ENCODE measurements at regions of chr6 and their contacts with region 1.

Region 1: DNA sequence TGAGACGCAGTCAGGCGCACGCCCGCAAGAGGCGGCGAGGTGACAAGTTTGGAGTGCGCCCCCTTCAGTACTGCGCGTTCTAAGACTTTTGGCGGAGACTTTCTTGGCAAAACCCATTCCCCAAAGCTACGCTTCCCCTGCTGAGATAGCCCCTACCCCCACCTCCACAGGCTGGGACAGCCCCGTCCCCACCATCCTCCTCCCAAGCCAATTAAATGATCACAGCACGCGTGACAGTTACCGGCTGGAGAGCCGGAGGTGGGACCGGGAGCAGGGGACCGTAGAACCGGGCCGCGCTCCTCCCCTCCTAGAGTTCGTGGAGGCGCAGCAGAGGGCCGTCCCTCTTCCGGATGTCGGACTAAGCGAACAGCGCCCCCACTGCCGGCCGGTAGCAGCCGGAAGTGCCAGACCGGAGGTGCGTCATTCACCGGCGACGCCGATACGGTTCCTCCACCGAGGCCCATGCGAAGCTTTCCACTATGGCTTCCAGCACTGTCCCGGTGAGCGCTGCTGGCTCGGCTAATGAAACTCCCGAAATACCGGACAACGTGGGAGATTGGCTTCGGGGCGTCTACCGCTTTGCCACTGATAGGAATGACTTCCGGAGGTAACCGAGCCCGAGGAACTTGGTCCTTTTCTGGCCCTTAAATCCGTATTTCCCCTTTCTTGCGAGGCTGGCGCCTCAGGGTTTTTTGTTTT is at the start of gene TOMM6:
- DNase-seq: peak; percentile 77
- ATAC-seq: peak; percentile 90
- H3K4me3 ChIP-seq: peak within 1 kb of the TSS; percentile 100
- H3K27ac ChIP-seq: peak within 1 kb of the TSS; percentile 93
- H3K4me1 ChIP-seq: peaks cover 22% of the 10 kb centered on the region
- H3K27me3 ChIP-seq: no peaks in the 10 kb centered on the region
- CTCF ChIP-seq: peak; percentile 84 to 89 (median 88)
- EP300 ChIP-seq: no peak
- POLR2A ChIP-seq: peak; percentile 89
- RAD21 ChIP-seq: no peak
- polyA plus RNA-seq, gene TOMM6: 653 to 729 TPM

Region 2: GRCh38 chr6:41602864-41603608 is 184.3 kb before region 1 on chr6:
- CTCF ChIA-PET with region 1: interaction called, 12 read pairs
- POLR2A ChIA-PET with region 1: no interaction called
- RAD21 ChIA-PET with region 1: interaction called, 4 read pairs
- SMC1A ChIA-PET with region 1: no interaction called
- in situ Hi-C with region 1: no loop called
- intact Hi-C with region 1: no loop called
- DNase-seq: peak; percentile 24
- ATAC-seq: peak; percentile 94
- H3K4me3 ChIP-seq: no peak overlapping the region
- H3K27ac ChIP-seq: no peak overlapping the region
- H3K4me1 ChIP-seq: no peaks in the 10 kb centered on the region
- H3K27me3 ChIP-seq: no peaks in the 10 kb centered on the region; a peak in 1 of 4 replicates
- CTCF ChIP-seq: peak; percentile 93 to 96 (median 96)
- EP300 ChIP-seq: no peak
- POLR2A ChIP-seq: no peak
- RAD21 ChIP-seq: peak; percentile 90

Region 3: DNA sequence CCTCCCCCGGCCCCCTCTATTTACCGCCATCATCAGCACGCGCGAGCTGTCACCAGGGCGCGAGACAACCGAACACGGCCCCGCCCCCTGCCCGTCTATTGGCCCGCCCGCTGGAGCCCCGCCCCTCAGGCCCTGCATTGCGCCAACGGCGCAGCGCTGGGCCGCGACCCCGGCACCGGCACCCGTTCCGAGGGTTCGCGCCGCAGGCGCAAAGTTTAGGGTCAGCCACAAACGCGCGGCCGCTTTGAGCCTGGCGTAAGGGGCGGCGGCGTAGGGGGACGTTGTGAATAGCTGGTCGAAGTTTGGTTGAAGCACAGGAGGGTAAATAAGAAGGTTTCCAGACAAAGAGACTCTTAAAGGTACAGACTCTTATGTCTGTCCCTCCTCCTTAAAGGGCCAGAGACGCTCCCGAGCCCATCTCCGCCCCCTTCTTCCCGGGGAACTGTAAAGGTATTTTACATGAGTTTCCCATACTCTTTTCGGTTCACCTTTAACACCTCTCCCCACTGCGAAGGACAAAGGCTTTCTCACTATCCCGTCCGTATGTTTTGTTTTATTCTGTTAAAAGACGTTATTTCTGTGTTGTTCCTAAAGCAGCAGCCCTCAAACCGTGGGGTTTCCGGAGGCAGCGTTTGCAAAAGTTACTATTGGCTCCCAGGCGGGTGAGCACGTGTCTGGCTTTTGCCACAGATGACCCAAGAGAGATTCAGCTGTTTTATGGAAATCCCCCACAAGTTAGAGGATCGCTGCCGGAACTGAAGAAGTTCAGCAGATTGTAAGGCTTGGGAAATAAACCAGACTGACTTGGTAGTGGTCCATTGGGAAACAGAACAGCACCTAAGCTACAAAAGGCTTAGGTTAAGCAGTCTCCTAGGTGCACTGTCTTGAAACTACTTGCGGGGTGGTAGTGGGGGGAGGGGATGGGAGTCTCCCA is 108.2 kb after region 1 on chr6 and contains the start of gene USP49:
- CTCF ChIA-PET with region 1: no interaction called
- POLR2A ChIA-PET with region 1: interaction called, 3 read pairs
- RAD21 ChIA-PET with region 1: interaction called, 10 read pairs
- SMC1A ChIA-PET with region 1: interaction called, 3 read pairs
- in situ Hi-C with region 1: no loop called
- intact Hi-C with region 1: loop called (anchors 5 kb)
- DNase-seq: peak; percentile 65
- ATAC-seq: peak; percentile 96
- H3K4me3 ChIP-seq: peak within 1 kb of the TSS; percentile 89
- H3K27ac ChIP-seq: peak within 1 kb of the TSS; percentile 90
- H3K4me1 ChIP-seq: peaks cover 6% of the 10 kb centered on the region; the same call in 1 of the 2 replicates
- H3K27me3 ChIP-seq: no peaks in the 10 kb centered on the region
- CTCF ChIP-seq: no peak
- EP300 ChIP-seq: no peak
- POLR2A ChIP-seq: peak; percentile 75
- RAD21 ChIP-seq: no peak
- polyA plus RNA-seq, gene USP49: 1.0 TPM

Region 4: DNA sequence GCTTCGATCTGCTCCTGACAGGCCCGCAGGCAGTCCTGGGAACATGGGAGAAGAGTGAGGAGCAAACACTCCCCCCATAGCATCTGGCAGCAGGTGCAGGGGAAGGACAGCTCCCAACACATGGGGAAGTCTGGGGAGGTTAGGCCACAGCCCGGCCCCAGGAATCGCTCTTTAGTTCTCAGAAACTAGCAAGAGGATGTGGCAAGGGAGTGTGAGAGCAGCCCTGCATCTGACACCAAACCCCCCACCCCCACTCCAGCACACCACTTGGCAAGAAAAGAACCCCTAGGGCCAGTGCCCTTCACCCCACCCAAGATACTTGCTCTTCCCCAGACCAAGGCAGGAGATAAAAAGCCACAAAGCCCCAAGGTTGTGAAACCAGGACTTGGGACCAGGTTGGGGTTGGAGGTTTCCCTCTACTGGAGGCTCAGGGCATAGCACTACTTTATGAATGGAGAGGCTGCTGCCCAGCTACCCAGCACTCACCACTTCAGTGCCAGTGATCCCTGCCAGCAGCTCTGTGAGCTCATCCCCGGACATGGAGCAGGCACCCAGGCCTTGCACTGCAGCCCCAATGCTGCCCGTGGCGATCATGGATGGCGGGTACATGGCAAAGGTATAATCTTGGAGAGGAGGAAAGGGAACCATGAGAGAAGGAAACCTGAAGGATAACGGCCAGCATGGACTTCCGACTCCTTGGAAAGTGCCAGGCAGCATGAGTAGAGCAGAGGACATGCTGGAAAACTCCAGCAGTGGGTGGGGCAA is 148.9 kb after region 1 on chr6:
- CTCF ChIA-PET with region 1: interaction called, 11 read pairs
- POLR2A ChIA-PET with region 1: no interaction called
- RAD21 ChIA-PET with region 1: no interaction called
- SMC1A ChIA-PET with region 1: interaction called, 5 read pairs
- in situ Hi-C with region 1: no loop called
- intact Hi-C with region 1: loop called (anchors 2 kb)
- DNase-seq: peak; percentile 53
- ATAC-seq: peak; percentile 83
- H3K4me3 ChIP-seq: no peak overlapping the region
- H3K27ac ChIP-seq: peak overlapping the region; percentile 60
- H3K4me1 ChIP-seq: peaks cover 43% of the 10 kb centered on the region
- H3K27me3 ChIP-seq: no peaks in the 10 kb centered on the region
- CTCF ChIP-seq: peak; percentile 84 to 94 (median 91)
- EP300 ChIP-seq: no peak
- POLR2A ChIP-seq: peak; percentile 35
- RAD21 ChIP-seq: peak; percentile 68

Region 5: DNA sequence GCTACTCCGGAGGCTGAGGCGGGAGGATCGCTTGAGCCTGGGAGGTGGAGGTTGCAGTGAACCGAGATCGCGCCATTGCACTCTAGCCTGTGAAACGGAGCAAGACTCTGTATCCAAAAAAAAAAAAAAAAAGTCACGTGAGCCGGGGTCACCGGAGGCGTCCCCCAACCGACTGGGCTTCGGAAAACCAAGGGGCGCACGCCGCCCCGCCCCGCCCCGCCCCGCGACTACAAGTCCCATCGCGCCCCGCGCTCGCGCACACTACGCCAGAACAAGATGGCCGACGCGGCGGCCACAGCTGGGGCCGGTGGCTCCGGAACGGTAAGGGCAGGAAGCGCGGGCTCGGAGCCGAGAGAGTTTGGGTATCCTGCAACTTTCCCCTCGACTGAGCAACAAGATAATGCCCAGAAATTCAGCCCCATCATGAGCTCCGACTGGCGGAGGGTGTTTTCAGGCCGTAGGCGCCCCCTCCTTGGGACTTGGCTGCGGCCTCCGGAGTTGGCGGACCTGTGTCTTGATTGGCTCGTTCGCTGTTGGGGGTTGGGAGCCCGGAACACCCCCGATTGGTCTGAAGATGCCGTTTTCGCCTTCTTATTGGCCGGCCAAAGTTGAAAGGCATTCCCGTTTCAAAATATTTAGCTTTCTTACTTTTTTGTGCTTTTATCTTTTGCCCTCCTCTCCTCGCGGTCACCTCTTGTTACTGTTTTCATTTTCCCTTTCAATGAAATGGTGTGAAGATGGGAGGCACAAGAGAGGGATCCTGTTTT is 263.1 kb after region 1 on chr6 and contains the start of gene TAF8:
- CTCF ChIA-PET with region 1: interaction called, 141 read pairs
- POLR2A ChIA-PET with region 1: interaction called, 30 read pairs
- RAD21 ChIA-PET with region 1: interaction called, 80 read pairs
- SMC1A ChIA-PET with region 1: interaction called, 54 read pairs
- in situ Hi-C with region 1: no loop called
- intact Hi-C with region 1: no loop called
- DNase-seq: peak; percentile 77
- ATAC-seq: peak; percentile 89
- H3K4me3 ChIP-seq: peak within 1 kb of the TSS; percentile 95
- H3K27ac ChIP-seq: peak within 1 kb of the TSS; percentile 97
- H3K4me1 ChIP-seq: peaks cover 28% of the 10 kb centered on the region
- H3K27me3 ChIP-seq: no peaks in the 10 kb centered on the region
- CTCF ChIP-seq: no peak
- EP300 ChIP-seq: no peak
- POLR2A ChIP-seq: peak; percentile 99
- RAD21 ChIP-seq: no peak
- polyA plus RNA-seq, gene TAF8: 17.5 to 25.5 TPM

Region 6: GRCh38 chr6:42563697-42564505 is 776.5 kb after region 1 on chr6 and contains the start of gene UBR2:
- CTCF ChIA-PET with region 1: no interaction called
- POLR2A ChIA-PET with region 1: no interaction called
- RAD21 ChIA-PET with region 1: no interaction called
- SMC1A ChIA-PET with region 1: no interaction called
- in situ Hi-C with region 1: no loop called
- intact Hi-C with region 1: loop called (anchors 5 kb)
- DNase-seq: peak; percentile 91
- ATAC-seq: peak; percentile 96
- H3K4me3 ChIP-seq: peak within 1 kb of the TSS; percentile 90
- H3K27ac ChIP-seq: peak within 1 kb of the TSS; percentile 93
- H3K4me1 ChIP-seq: no peaks in the 10 kb centered on the region; the same call in 1 of the 2 replicates
- H3K27me3 ChIP-seq: no peaks in the 10 kb centered on the region
- CTCF ChIP-seq: peak; percentile 32 to 40 (median 39); a peak in 5 of 6 replicates
- EP300 ChIP-seq: no peak
- POLR2A ChIP-seq: peak; percentile 97
- RAD21 ChIP-seq: no peak
- polyA plus RNA-seq, gene UBR2: 2.3 to 5.9 TPM